ENCODE measurements at regions of chr7 and their contacts with region 1.

Region 1: DNA sequence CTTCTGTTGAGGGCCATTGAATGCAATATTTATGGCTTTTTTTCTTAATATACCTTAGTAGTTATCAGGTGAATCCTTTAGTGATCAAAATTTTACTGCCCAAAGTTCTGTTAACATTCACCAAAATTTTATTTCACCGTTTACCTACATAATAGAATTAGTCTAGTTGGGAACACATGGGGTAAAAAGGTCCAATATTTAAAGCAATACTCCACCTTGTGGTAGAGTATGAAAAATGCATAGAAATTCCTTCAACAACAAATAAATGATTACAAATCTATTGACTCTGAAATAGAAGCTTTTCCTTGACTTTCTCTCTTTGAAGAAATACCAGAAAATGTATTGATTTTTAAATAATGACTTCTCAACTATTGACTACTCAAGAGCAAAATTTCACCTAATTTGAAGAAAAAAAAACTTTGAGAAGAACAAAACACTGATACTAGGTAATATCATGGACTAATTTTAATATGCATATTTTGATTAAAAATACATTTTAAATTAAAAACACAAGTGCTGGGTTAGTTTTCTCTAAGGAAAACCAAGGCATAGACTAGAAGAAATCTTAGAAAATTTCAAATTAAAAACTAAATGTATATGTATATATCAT is 43.3 kb downstream of the POLR1F start:
- DNase-seq: peak; percentile 11
- H3K4me3 ChIP-seq: no peak overlapping the region
- H3K27ac ChIP-seq: no peak overlapping the region
- H3K4me1 ChIP-seq: peaks cover 4% of the 10 kb centered on the region
- H3K27me3 ChIP-seq: no peaks in the 10 kb centered on the region
- CTCF ChIP-seq: peak; percentile 52 to 64

Region 2: GRCh38 chr7:18590744-18591340 is 1074.7 kb before region 1 on chr7:
- CTCF ChIA-PET with region 1: no interaction called
- dilution Hi-C with region 1: no loop called
- in situ Hi-C with region 1: no loop called
- intact Hi-C with region 1: loop called (anchors 10 kb)
- DNase-seq: peak; percentile 26
- H3K4me3 ChIP-seq: no peak overlapping the region
- H3K27ac ChIP-seq: no peak overlapping the region
- H3K4me1 ChIP-seq: no peaks in the 10 kb centered on the region
- H3K27me3 ChIP-seq: no peaks in the 10 kb centered on the region
- CTCF ChIP-seq: peak; percentile 41 to 51

Region 3: GRCh38 chr7:19939746-19940145 is 274.2 kb after region 1 on chr7:
- CTCF ChIA-PET with region 1: no interaction called
- dilution Hi-C with region 1: no loop called
- in situ Hi-C with region 1: no loop called
- intact Hi-C with region 1: no loop called
- DNase-seq: peak; percentile 78
- H3K4me3 ChIP-seq: no peak overlapping the region
- H3K27ac ChIP-seq: peak overlapping the region; percentile 41
- H3K4me1 ChIP-seq: peaks cover 15% of the 10 kb centered on the region
- H3K27me3 ChIP-seq: no peaks in the 10 kb centered on the region
- CTCF ChIP-seq: no peak